Left ventricle myocardium superior (tissue), 1 donor: ENCODE measurements at regions of chr12 and their contacts with region 1.

Region 1: GRCh38 chr12:13864081-13864673 is 117.2 kb downstream of the GRIN2B start:
- DNase-seq: peak; percentile 82
- ATAC-seq: peak; percentile 70

Region 2: GRCh38 chr12:14156606-14157005 is 292.4 kb after region 1 on chr12:
- intact Hi-C with region 1: no loop called
- DNase-seq: no peak
- ATAC-seq: no peak

Region 3: GRCh38 chr12:14167005-14167628 is 302.9 kb after region 1 on chr12:
- intact Hi-C with region 1: loop called (anchors 5 kb)
- DNase-seq: no peak
- ATAC-seq: no peak